Posterior vena cava (tissue), 2 donors: ENCODE measurements at regions of chr6 and their contacts with region 1.

Region 1: DNA sequence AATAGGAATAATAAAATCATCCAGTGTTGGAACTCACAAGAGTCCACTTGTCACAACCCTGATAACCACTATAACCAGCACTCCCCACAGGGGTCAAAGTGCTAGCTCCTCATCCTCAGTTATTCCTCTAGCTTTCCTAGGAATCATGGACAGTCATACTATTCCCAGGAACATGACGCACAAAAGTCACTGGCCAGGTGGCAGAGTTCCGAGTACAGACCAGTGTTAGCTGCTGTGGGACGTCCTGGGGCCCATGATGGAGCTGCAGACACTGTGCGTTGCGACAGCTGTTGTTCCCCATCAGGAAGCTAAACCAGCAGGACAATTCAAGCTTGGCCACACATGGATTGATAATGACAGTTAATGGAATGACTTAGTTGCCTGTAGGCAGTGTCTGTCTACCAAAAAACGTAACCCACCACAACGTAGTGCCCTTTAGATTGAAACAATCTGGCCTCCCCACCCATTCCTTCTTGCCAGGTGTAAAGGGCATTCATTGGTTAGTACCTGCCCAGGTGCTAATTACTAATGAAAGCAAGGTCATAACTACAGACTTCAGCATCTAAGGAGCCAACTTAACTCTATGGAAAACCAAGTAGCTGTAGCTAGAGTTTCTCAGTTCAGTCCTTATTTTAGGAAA is 17.4 kb downstream of the EZR start:
- DNase-seq: no peak

Region 2: GRCh38 chr6:158829883-158830311 is 28.1 kb after region 1 on chr6:
- intact Hi-C with region 1: loop called in 1 of 2 experiments (anchors 1 kb)
- DNase-seq: no peak